ENCODE measurements at regions of chr2 and their contacts with region 1.

Region 1: DNA sequence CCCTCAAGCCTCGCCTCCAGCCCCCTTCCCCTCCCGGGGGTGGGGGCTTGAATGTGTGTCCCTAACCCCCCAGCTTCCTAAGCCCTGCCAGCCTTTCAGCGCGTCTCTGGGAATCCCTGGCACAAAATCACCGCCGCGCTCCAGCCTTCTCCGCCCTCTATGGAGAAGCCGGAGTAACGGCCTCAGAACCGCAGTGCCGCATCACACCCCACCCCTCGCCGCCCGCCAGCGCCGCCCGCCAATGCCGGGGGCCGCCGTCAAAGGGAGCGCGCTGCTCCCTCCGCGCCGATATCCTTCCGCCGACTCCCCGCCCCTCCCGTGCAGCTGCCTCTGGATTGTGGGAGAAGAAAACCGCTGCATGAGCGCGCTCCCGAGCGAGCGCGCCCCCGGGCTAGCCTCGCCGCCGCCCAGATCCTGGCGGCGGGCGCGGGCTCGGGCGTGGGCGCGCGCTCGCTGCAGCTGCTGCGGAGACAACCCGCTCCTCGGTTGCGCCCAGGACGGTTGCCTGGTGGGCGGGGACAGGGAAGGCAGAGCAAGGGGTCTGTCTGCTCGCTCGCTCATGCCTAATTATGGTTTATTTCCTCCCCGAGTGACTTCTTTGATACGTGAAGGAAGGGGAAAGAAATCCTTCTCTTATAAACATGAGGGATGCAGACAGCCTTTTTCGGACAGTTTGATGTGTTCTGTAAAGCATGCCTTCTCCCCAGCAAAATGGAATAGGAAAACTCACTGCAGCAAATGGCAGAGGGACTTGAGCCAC is at the start of gene CCDC88A:
- DNase-seq: peak; percentile 88 to 97 (median 96)
- H3K4me3 ChIP-seq: peak within 1 kb of the TSS; percentile 91 to 99 (median 98)
- H3K4me3 Mint-ChIP-seq: peak within 1 kb of the TSS; percentile 99 to 100
- H3K27ac ChIP-seq: peak within 1 kb of the TSS; percentile 82 to 94
- H3K27ac Mint-ChIP-seq: peak within 1 kb of the TSS; percentile 93 to 99 (median 98)
- H3K4me1 ChIP-seq: peaks cover 44 to 81% of the 10 kb centered on the region in 2 donors
- H3K4me1 Mint-ChIP-seq: peaks cover 73% of the 10 kb centered on the region
- H3K27me3 ChIP-seq: no peaks in the 10 kb centered on the region
- H3K27me3 Mint-ChIP-seq: no peaks in the 10 kb centered on the region
- CTCF ChIP-seq: no peak
- polyA plus RNA-seq, gene CCDC88A: 9.9 to 57.1 (median 17.9) TPM

Region 2: GRCh38 chr2:55364189-55365055 is 55.4 kb before region 1 on chr2:
- intact Hi-C with region 1: loop called in 1 of 2 experiments (anchors 10 kb)
- DNase-seq: peak; percentile 23 to 33 (median 30)
- H3K4me3 ChIP-seq: no peak overlapping the region
- H3K4me3 Mint-ChIP-seq: no peak overlapping the region
- H3K27ac ChIP-seq: peak overlapping the region in 1 of 2 donors; percentile 43
- H3K27ac Mint-ChIP-seq: peak overlapping the region in 5 of 7 donors; percentile 2 to 82 (median 68)
- H3K4me1 ChIP-seq: peaks cover 3 to 19% of the 10 kb centered on the region in 2 donors
- H3K4me1 Mint-ChIP-seq: peaks cover 13% of the 10 kb centered on the region
- H3K27me3 ChIP-seq: no peaks in the 10 kb centered on the region
- H3K27me3 Mint-ChIP-seq: no peaks in the 10 kb centered on the region
- CTCF ChIP-seq: no peak

Region 3: GRCh38 chr2:55519938-55520885 is 100.4 kb after region 1 on chr2:
- intact Hi-C with region 1: loop called (anchors 5 kb)
- DNase-seq: peak in 2 of 3 donors; percentile 15 to 16
- H3K4me3 ChIP-seq: peak overlapping the region; percentile 56 to 93 (median 86)
- H3K4me3 Mint-ChIP-seq: peak overlapping the region; percentile 94 to 96
- H3K27ac ChIP-seq: peak overlapping the region; percentile 17
- H3K27ac Mint-ChIP-seq: peak overlapping the region; percentile 46 to 93 (median 88)
- H3K4me1 ChIP-seq: peaks cover 16 to 18% of the 10 kb centered on the region in 2 donors
- H3K4me1 Mint-ChIP-seq: peaks cover 18% of the 10 kb centered on the region
- H3K27me3 ChIP-seq: no peaks in the 10 kb centered on the region
- H3K27me3 Mint-ChIP-seq: peaks cover 0 to 5% (median 2%) of the 10 kb centered on the region in 3 donors
- CTCF ChIP-seq: no peak

Measured in CD14-positive monocyte (primary cell).